Mammary epithelial cell (primary cell): ENCODE measurements at regions of chr20 and their contacts with region 1.

Region 1: GRCh38 chr20:49219089-49219923 is at the start of gene DDX27:
- DNase-seq: peak; percentile 96
- H3K4me3 ChIP-seq: peak within 1 kb of the TSS; percentile 57 to 93 (median 59)
- H3K27ac ChIP-seq: peak within 1 kb of the TSS; percentile 72
- H3K4me1 ChIP-seq: peaks cover 20% of the 10 kb centered on the region
- H3K27me3 ChIP-seq: no peaks in the 10 kb centered on the region
- CTCF ChIP-seq: no peak
- total RNA-seq, gene DDX27: 39.0 to 44.1 TPM

Region 2: DNA sequence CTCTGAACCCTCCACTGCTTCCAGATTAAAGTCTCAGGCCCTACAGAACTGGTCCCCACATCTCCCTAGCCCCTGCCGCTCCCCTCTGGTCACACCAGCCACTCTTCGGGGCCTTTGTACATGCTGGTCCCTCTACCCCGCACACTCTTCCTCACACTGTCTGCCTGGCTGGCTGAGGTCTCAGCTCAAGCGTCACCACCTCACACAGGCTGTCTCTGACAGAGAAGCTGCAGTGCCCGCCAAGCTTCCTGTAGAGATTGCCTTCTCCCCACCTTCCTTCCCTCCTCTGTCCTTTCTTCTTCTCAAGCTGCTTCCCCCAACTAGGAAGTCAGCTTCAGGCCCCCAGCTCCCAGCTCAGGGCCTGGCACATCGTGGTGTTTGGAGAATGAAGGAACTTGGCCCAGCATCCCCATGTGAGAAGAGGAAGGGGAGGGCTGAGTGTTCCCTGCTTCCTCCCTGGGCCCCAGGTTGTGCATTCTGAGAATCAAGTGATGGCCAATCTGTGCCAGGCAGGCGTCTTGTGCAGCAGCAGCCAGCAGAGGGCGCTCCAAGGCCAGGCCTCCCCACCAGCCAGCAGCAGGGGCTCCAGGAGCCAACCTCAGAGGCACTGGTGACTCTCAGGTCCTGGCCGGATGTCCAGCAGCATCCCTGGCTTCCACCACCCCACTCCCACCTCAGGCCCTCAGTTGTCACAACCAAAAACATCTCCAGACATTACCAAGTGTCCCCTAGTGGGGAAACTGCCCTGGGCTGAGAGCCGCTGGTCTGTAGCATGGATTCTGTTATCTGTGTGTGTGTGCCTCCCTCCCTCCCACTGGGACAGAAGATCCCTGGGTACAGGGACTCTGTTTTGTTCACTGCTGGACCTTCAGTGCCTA is 583.6 kb before region 1 on chr20:
- CTCF ChIA-PET with region 1: no interaction called
- dilution Hi-C with region 1: no loop called
- in situ Hi-C with region 1: no loop called
- intact Hi-C with region 1: loop called (anchors 10 kb)
- DNase-seq: peak; percentile 26
- H3K4me3 ChIP-seq: no peak overlapping the region
- H3K27ac ChIP-seq: no peak overlapping the region
- H3K4me1 ChIP-seq: no peaks in the 10 kb centered on the region
- H3K27me3 ChIP-seq: no peaks in the 10 kb centered on the region
- CTCF ChIP-seq: peak; percentile 89 to 91

Region 3: DNA sequence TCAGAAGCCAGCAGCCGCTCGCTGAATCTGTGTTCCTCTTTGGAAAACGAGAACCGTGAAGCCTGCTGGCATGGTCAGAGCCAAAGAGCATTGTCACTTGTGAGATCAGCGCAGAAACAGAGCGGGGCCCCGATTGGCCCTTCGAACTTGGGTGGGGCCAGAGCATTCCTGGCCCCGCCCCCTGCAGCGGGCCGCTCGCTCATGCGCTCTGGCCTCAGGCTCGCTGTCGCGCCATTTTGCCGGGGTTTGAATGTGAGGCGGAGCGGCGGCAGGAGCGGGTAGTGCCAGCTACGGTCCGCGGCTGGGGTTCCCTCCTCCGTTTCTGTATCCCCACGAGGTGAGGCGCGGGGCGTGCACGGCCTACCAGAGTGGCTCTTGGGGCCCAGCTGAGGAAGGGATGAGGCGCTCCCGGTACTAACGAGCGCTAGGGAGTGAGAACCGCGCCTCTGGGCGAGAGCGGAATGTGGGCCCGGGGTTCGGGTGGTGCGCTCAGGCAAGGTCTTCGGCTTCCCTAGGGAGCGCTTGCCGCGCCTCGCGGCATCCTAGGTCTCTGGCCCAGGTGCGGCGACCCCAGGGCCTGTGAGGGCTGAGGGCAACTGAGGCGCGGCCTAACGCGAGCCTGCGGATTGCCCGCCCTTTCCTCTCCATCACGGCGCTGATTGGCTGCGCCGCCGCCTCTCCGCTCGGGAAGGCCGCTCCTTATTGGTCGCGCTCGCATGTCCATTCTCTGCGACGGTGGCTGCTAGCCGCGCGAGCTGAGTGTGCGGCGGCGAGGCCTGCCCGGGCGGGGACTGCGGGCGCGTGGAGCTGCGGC is 173.0 kb before region 1 on chr20 and contains the start of gene CSE1L:
- CTCF ChIA-PET with region 1: no interaction called
- dilution Hi-C with region 1: no loop called
- in situ Hi-C with region 1: no loop called
- intact Hi-C with region 1: loop called (anchors 5 kb)
- DNase-seq: peak; percentile 93
- H3K4me3 ChIP-seq: peak within 1 kb of the TSS; percentile 73 to 100 (median 87)
- H3K27ac ChIP-seq: peak within 1 kb of the TSS; percentile 88
- H3K4me1 ChIP-seq: peaks cover 26% of the 10 kb centered on the region
- H3K27me3 ChIP-seq: no peaks in the 10 kb centered on the region
- CTCF ChIP-seq: no peak
- total RNA-seq, gene CSE1L: 83.5 to 114 TPM

Region 4: DNA sequence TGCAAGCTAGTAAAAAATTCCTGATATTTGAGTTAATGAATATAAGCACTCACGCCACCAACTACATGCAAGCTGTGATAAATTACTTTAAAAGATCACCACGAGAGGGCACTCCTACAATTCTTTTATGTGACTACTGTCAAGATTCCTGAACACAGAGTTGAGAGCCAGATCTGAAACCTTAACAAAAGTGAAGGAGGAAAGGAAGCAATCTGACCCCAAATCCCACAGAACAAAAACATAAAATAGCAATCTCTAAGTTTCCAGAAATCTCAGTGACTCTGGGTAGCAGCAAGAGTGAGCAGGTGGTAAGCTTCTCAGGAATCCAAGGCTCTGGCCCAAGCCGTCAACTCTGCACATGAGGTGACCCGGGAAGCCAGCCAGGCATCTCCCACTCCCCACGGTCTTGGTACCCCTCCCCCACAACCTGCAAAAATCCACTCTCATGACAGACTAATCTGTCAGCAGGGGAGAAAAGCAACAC is 86.3 kb before region 1 on chr20:
- CTCF ChIA-PET with region 1: interaction called, 26 read pairs
- dilution Hi-C with region 1: no loop called
- in situ Hi-C with region 1: loop called (anchors 5 kb)
- intact Hi-C with region 1: loop called (anchors 1 kb)
- DNase-seq: peak; percentile 45
- H3K4me3 ChIP-seq: no peak overlapping the region
- H3K27ac ChIP-seq: no peak overlapping the region
- H3K4me1 ChIP-seq: no peaks in the 10 kb centered on the region
- H3K27me3 ChIP-seq: no peaks in the 10 kb centered on the region
- CTCF ChIP-seq: peak; percentile 37 to 53

Region 5: DNA sequence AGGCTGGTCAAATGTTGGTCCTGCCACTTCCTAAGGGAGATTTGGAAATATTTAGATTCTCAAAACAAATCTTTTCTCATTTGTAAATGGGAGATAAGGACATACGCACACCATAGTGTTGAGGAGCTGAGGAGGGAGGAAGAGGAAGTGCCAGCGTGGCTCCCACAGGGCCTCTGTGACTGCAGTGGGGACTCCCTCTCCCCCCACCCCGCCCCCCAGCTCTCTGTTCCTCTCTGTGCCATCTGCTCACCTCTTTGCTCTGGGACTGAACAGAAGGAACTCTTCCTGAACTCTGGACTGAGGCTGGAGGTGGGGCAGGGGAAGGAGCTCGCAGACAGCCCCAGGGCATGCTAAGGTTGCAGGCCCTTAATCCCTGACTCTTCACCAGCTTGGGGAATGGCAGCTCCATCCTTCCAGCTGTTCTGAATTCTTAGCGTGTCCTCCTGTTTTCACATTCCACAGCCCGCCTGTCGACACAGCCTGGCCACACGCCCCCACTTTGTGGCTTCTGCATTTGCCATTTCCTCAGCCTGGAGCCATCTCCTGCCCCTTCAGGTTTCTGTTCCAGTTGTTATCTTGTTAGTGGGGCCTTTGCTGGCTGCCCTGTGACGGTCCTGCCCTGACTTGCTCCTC is 11.4 kb after region 1 on chr20:
- CTCF ChIA-PET with region 1: interaction called, 12 read pairs
- dilution Hi-C with region 1: no loop called
- in situ Hi-C with region 1: no loop called
- intact Hi-C with region 1: no loop called
- DNase-seq: peak; percentile 56
- H3K4me3 ChIP-seq: no peak overlapping the region
- H3K27ac ChIP-seq: no peak overlapping the region
- H3K4me1 ChIP-seq: peaks cover 22% of the 10 kb centered on the region
- H3K27me3 ChIP-seq: no peaks in the 10 kb centered on the region
- CTCF ChIP-seq: no peak